ENCODE measurements at regions of chr3 and their contacts with region 1.

Region 1: DNA sequence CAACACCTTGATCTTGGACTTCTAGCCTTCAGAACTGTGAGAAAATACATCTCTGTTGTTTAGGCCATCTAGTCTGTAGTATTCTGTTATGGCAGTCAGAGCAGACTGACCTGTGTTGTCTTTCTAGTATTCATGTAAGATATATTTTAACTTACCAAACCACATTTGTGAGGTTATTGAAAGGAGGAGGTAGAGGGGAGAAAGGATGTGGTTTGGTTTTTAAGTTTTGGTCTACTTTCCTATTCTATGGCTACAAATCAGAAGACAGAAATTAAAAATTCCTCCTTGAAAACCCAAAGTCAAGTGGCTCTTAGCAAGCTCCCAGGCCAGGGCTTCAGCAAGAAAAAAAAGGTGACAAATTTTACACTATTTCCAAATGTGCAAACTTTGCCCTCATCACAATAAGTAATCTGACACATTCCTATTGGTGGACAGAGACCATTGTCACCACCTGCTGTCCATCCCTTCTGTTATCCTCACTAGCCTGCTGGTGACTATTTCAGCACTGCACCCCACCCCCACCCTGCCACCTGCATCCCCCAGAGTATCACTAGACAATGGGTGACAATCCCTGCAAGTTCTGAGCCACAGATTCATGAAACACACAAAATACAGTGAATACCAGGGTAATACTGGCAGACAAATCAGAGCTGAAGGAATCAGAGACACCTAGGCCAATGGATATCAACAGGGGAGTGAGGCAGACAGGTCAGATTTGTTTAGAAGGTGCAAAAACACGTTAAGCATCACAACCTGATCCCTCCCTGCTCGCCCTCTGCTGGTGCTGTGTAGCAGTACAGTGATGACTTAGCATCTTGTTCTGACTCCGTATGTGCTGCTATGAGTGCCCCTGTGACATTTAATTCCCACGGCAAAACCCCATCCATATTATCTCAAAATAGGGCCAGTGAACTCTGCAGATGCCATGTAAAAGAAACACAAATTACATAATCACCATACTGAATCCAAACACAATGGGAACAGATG is 79.0 kb upstream of the DCLK3 start:
- DNase-seq: peak; percentile 85
- ATAC-seq: peak; percentile 95
- H3K4me3 Mint-ChIP-seq: no peak overlapping the region
- H3K27ac Mint-ChIP-seq: peak overlapping the region; percentile 9
- H3K4me1 Mint-ChIP-seq: peaks cover 18% of the 10 kb centered on the region
- H3K27me3 Mint-ChIP-seq: no peaks in the 10 kb centered on the region

Region 2: GRCh38 chr3:36729204-36730056 is 113.9 kb before region 1 on chr3:
- CTCF ChIA-PET with region 1: no interaction called
- POLR2A ChIA-PET with region 1: no interaction called
- intact Hi-C with region 1: loop called in 1 of 2 experiments (anchors 1 kb)
- DNase-seq: no peak
- ATAC-seq: no peak
- H3K4me3 Mint-ChIP-seq: no peak overlapping the region
- H3K27ac Mint-ChIP-seq: no peak overlapping the region
- H3K4me1 Mint-ChIP-seq: no peaks in the 10 kb centered on the region
- H3K27me3 Mint-ChIP-seq: no peaks in the 10 kb centered on the region